Mammary epithelial cell (primary cell): ENCODE measurements at regions of chr6 and their contacts with region 1.

Region 1: GRCh38 chr6:36780442-36781177 is 58.6 kb downstream of the CPNE5 start:
- DNase-seq: peak; percentile 11
- H3K4me3 ChIP-seq: no peak overlapping the region
- H3K27ac ChIP-seq: no peak overlapping the region
- H3K4me1 ChIP-seq: peaks cover 10% of the 10 kb centered on the region
- H3K27me3 ChIP-seq: no peaks in the 10 kb centered on the region
- CTCF ChIP-seq: no peak

Region 2: DNA sequence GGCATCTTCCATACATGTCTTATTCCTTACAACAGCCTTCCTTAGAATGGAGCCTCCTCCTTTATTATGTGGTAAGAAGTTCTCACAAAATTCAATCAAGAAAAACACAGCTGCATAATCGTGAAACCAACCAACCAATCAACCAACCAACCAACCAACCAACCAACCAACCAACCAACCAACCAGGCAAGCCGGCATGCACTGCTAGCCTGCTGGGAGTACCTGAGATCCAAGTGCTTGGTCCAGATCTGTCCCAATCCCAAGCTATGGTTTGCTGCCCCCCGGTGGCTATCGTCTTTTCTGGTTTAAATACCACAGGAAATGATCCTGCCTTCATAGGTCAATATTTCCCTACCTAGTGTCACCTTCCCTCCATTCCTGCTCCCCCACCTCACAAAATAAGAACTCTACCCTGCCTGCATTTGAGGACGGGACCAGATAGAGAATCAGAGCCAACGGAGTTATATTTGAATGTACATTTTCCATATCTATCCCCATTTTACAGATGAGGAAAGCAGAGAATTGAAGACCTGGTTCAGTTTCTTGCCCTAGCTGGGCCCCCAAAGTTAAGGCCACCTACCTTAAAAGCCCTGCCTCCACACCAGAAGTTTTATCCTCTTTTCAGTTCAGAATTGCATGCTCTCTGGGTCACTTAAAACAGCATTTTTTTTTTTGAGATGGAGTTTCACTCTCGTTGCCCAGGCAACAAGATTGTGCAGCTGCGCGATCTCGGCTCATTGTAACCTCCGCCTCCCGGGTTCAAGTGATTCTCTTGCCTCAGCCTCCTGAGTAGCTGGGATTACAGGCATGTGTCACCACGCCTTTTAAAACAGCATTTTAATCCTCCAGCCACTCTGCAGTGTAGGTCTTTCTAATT is 55.9 kb before region 1 on chr6:
- CTCF ChIA-PET with region 1: no interaction called
- dilution Hi-C with region 1: no loop called
- in situ Hi-C with region 1: no loop called
- intact Hi-C with region 1: no loop called
- DNase-seq: peak; percentile 63
- H3K4me3 ChIP-seq: no peak overlapping the region
- H3K27ac ChIP-seq: no peak overlapping the region
- H3K4me1 ChIP-seq: peaks cover 18% of the 10 kb centered on the region
- H3K27me3 ChIP-seq: no peaks in the 10 kb centered on the region
- CTCF ChIP-seq: peak; percentile 78 to 80

Region 3: GRCh38 chr6:36851149-36851614 is 70.6 kb after region 1 on chr6:
- CTCF ChIA-PET with region 1: interaction called, 4 read pairs
- dilution Hi-C with region 1: no loop called
- in situ Hi-C with region 1: no loop called
- intact Hi-C with region 1: loop called (anchors 1 kb)
- DNase-seq: peak; percentile 58
- H3K4me3 ChIP-seq: no peak overlapping the region
- H3K27ac ChIP-seq: no peak overlapping the region
- H3K4me1 ChIP-seq: peaks cover 28% of the 10 kb centered on the region
- H3K27me3 ChIP-seq: no peaks in the 10 kb centered on the region
- CTCF ChIP-seq: peak; percentile 83 to 85